ENCODE measurements at regions of chr11 and their contacts with region 1.

Region 1: DNA sequence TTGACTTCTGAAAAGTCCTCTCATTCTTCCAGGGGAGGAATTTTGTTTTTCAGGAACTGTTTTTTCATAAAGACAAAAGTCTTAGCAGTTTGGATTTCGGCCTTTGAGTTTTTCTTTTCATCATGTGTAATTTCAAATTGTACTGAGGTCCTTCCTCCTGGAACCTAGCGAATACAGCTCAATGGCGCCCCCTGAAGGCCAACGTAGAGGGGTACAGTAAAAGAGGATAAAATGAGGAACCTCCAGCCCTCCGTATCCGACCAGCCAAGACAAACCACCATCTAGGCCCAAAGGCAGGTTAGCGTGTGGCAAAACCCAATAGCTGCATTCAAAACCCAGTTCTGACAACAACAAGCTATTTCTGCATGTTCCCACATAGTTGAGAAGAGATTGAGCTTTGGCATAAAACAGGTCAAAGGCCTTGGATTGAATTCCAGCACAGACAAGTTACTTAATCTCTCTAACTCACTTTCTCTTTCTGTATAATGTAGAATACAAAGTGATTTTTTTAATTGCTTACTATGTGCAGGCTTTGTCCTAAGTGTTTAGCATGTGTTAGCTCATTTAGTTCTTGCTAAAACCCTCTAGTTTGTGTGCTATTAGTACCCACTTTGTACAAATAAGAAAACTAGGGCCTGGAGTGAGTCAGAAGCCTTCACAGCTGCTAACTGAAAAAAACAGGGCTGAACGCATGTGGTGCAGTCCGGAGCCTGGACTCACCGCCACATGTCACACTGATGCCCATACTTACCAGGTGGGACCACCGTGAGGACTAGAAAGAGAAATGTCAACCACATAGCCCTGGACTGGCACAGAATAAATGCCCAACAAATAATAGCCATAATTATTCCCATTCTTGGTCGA is 43.2 kb upstream of the ETS1 start:
- DNase-seq: peak; percentile 86 to 94 (median 88)
- ATAC-seq: peak; percentile 74 to 93 (median 88)
- H3K4me3 ChIP-seq: no peak overlapping the region
- H3K27ac ChIP-seq: peak overlapping the region in 3 of 12 donors; percentile 12 to 80 (median 38)
- H3K4me1 ChIP-seq: peaks cover 0 to 48% (median 10%) of the 10 kb centered on the region in 12 donors
- H3K27me3 ChIP-seq: no peaks in the 10 kb centered on the region
- CTCF ChIP-seq: peak; percentile 82 to 94 (median 90)
- POLR2A ChIP-seq: no peak

Region 2: GRCh38 chr11:128157423-128158298 is 472.9 kb before region 1 on chr11:
- intact Hi-C with region 1: loop called in 1 of 10 experiments (anchors 5 kb)
- DNase-seq: peak in 2 of 5 donors; percentile 25 to 37
- ATAC-seq: peak; percentile 58 to 84 (median 82)
- H3K4me3 ChIP-seq: peak overlapping the region in 6 of 12 donors; percentile 16 to 34 (median 26)
- H3K27ac ChIP-seq: no peak overlapping the region
- H3K4me1 ChIP-seq: peaks cover 0 to 11% (median 0%) of the 10 kb centered on the region in 12 donors
- H3K27me3 ChIP-seq: no peaks in the 10 kb centered on the region
- CTCF ChIP-seq: peak; percentile 71 to 95 (median 88)
- POLR2A ChIP-seq: no peak

Region 3: DNA sequence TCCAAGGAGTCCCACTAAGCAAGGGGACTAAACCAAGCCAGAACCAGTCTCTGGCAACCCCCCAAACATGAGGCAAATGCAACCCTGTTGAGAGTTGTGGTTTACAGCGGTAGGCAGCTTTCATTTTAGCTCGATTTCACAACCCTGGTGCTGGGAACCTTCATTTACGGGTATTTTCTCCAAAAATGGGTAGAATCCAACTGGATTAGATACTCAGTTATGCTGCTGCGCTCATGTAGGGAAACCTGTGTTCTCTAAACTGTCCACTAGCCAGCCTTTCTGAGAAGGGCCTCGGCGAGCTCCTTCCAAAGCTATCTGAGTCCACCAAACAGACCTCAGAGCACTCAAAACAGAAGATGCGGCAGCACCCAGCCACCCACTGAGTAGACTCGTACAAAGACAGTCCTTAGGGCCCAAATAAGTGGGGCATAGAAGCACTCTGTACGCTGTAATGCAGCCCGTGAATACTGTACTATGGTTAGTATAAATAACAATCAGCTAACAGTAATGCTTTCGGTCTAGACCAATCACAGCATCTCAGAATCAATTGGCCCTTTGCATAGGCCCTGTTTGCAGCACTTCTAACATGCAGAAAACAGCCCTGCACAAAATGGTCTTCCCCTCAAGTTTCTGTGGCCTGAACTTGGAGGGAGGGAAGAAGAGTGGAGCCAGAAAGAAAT is 147.9 kb before region 1 on chr11:
- intact Hi-C with region 1: loop called in 8 of 10 experiments (anchors 5 to 10 kb)
- DNase-seq: peak in 3 of 5 donors; percentile 21 to 56 (median 52)
- ATAC-seq: peak in 3 of 4 donors; percentile 16 to 67 (median 21)
- H3K4me3 ChIP-seq: peak overlapping the region in 4 of 12 donors; percentile 11 to 37 (median 30)
- H3K27ac ChIP-seq: peak overlapping the region in 11 of 12 donors; percentile 34 to 81 (median 71)
- H3K4me1 ChIP-seq: peaks cover 3 to 88% (median 70%) of the 10 kb centered on the region in 12 donors
- H3K27me3 ChIP-seq: no peaks in the 10 kb centered on the region
- CTCF ChIP-seq: no peak
- POLR2A ChIP-seq: no peak

Region 4: DNA sequence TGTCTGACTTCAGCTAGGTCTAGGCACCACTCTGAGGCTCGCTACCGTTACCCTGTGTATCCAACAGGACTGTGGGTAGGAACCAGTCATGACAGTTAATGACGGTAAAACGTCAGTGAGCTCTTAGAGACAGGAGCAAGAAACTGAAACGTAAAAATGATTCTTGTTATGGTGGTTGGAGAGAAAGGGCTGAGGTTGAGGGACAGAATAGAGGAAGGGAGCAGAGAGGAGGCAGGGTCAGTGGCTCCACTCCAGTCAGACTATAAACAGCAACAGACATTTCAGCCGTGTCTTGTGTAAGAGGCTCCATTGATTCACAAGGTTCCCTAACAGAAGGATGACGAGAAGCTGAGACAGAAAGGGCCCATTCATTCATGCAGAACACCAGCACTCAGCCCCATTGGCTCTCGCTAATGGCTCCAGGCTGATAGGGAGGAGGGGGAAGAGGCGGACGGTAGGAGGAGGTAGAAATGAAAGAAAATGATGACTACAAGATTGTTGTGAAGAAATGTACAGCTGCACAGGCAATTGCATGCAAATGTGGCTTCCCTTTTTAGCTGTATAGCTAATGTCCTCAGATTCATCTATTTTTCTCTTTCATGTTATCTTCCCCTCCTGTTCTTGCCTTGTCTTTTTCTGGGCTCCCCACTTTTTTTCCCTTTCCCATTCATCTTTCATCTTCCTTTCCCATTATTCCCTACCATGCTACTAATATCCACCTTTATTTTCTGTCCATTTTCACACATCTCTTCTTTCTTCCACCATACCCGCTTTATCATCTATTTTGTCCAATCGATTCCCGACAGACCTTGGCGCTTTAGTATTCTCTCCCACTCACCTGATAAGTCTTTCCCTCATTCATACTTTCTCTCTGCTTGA is 77.6 kb before region 1 on chr11:
- intact Hi-C with region 1: loop called in 8 of 10 experiments (anchors 1 to 10 kb)
- DNase-seq: no peak
- ATAC-seq: peak in 2 of 4 donors; percentile 20 to 45
- H3K4me3 ChIP-seq: peak overlapping the region in 1 of 12 donors; percentile 8
- H3K27ac ChIP-seq: peak overlapping the region in 10 of 12 donors; percentile 6 to 63 (median 38)
- H3K4me1 ChIP-seq: peaks cover 0 to 66% (median 31%) of the 10 kb centered on the region in 12 donors
- H3K27me3 ChIP-seq: no peaks in the 10 kb centered on the region
- CTCF ChIP-seq: no peak
- POLR2A ChIP-seq: no peak

Region 5: DNA sequence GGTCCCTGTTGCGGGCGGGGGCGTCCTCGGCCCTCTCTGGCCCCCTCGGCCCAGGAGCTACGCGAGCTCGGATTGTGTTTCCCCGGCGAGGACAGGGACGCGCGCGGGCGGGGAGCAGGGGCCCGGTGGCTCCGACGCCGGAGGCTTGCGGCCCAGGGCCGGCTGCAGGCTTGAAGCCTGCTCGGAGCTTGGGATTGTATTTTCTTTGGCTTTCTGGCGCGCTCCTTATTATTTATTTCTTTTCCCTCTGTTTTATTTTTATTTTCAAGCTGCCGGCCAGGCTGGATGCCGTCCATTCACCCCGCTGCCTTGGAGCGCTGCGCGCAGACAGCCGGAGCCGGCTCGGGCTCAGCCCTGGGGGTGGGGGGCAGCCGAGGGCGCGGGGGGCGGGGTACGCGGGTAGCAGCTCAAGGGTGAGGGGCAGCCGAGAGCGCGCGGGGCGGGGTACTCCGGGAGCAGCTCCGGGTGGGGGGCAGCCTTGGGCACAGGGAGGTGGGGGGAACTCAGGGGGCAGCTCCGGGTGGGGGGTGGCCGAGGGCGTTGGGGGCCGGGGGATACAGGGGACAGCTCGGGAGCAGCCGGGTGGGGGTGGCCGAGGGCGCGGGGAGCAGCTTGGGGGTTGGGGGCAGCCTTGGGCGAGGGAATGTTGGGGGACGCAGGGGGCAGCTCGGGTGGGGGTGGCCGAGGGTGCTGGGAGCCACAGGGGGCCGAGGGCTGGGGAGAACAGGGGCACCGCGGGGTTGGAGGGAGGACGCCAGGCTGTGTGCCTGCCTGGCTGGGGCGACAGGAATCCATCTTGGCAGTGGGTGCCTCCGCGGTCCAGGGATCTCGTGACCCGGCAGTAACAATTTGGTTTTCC is 193.8 kb after region 1 on chr11:
- intact Hi-C with region 1: loop called in 1 of 10 experiments (anchors 5 kb)
- DNase-seq: peak in 3 of 5 donors; percentile 24 to 60 (median 31)
- ATAC-seq: peak in 3 of 4 donors; percentile 26 to 49 (median 44)
- H3K4me3 ChIP-seq: peak overlapping the region in 7 of 12 donors; percentile 5 to 36 (median 26)
- H3K27ac ChIP-seq: peak overlapping the region in 5 of 12 donors; percentile 35 to 63 (median 43)
- H3K4me1 ChIP-seq: peaks cover 0 to 12% (median 2%) of the 10 kb centered on the region in 12 donors
- H3K27me3 ChIP-seq: no peaks in the 10 kb centered on the region
- CTCF ChIP-seq: no peak
- POLR2A ChIP-seq: no peak

Measured in heart left ventricle (tissue), 16 donors.